Left cardiac atrium (tissue), 4 donors: ENCODE measurements at regions of chr2 and their contacts with region 1.

Region 1: DNA sequence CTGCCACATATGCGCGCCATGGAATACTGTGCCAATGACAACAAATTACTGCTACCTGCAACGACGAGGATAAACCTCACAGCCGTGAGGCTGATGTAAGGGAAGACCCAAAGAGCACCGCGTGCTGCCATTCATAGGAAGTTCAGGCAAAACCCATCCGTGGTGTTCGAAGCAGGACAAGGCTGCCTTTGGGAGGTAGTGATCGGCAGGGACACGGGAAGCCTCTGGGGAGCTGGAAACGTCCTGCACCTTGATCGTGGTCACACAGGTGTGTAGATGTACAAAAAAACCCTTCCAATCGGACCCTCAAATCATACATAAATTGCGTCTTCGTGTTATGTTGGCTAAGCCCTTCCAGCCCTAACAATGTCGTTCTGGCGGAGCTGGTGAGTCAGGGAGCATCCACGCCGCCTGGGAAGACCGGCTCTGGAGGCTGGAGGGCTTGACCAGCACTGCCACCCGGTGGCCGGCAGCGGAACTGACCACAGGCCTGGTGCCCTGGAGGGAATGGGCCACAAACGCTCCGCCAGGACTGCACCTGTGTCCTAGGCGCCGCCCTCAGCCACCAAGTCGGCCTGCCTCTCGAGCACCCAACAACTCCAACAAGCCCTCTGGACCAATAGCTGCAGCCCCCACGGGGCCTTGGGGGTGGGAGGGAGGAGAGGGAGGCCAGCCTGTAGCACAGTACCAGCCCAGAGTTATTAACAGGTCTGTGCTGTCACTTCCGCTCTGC is 4.1 kb upstream of the NEURL3 start:
- DNase-seq: peak; percentile 90
- ATAC-seq: peak; percentile 89 to 90

Region 2: GRCh38 chr2:96138179-96139145 is 370.8 kb before region 1 on chr2 and contains the start of gene ASTL:
- intact Hi-C with region 1: loop called (anchors 5 to 10 kb)
- DNase-seq: no peak
- ATAC-seq: peak; percentile 54 to 65
- total RNA-seq, gene ASTL: not detected

Region 3: DNA sequence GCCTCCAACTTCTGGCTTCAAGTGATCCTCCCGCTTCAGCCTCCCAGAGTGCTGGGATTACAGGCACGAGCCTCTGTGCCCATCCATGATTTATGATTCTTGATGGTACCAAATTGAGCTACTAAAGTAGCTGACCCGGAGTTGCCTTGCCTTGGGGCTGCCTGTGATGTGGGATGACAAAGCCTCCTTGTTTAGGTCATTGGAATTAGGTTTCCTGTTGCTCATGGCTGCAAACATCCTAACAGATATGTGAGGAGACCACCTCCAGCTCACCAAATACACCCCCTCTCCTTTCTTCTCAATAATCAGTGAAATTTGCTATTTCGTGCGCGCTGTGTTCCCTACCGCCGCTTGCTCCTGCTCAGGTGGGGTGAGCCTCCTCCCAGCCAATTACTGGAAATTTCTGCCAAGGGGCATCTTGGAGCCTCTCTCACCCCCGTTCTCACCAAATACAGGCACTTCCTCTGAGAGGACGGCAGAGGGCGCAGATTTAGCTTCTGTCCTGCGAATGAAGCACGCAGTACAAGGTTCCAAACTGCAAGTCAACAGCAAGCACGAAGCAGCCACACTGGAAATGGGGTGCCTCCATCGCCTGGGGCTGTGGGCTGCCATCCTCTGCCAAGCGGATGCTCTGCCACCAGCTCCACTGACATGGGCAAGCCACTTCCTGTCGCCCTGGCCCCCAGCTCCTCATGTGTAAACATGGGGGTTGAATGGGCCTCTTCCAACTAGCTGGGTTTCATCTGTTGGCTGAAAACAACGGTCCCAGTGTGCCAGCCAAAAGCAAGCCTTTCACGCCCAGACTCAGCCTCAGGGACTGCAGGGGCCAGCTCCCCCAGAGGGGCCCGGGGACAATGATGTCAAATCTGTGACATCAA is 102.0 kb before region 1 on chr2:
- intact Hi-C with region 1: loop called (anchors 2 to 5 kb)
- DNase-seq: peak; percentile 61
- ATAC-seq: peak; percentile 63 to 66

Region 4: DNA sequence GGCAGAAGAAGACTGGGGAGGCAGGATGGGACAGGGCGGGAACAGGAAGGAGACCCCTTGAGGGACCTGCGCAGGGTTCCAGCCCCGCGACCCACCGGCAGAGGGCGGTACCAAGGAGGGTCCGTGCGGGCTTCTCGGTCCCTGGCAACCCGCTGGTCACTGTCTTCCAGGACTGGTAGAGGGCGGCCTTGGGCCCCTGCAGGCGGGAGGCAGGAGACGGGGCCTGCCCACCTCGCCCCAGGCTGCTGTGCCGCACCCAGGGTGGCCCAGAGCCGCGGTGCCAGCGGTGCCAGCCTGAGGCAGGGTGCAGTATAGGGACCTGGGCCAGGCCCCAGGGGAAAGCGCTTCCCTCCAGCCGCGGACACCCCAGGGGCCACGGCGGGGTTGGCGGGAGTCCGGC is 38.6 kb before region 1 on chr2:
- intact Hi-C with region 1: loop called in 1 of 2 experiments (anchors 5 kb)
- DNase-seq: peak; percentile 71
- ATAC-seq: peak; percentile 89 to 93